Activated naive CD4-positive, alpha-beta T cell treated with anti-CD3 and anti-CD28 coated beads, Interleukin-2, amount 10 ng/mL, durations not matched to agents 7 days and 5 days (primary cell): ENCODE measurements at regions of chr18 and their contacts with region 1.

Region 1: GRCh38 chr18:12934454-12935071 is 13.2 kb upstream of the SEH1L start:
- DNase-seq: peak; percentile 86
- H3K4me3 Mint-ChIP-seq: no peak overlapping the region
- H3K27ac Mint-ChIP-seq: no peak overlapping the region
- H3K4me1 Mint-ChIP-seq: peaks cover 3% of the 10 kb centered on the region
- H3K27me3 Mint-ChIP-seq: peaks cover 22% of the 10 kb centered on the region

Region 2: GRCh38 chr18:12726774-12727550 is 207.6 kb before region 1 on chr18:
- CTCF ChIA-PET with region 1: interaction called, 122 read pairs
- DNase-seq: peak; percentile 68
- H3K4me3 Mint-ChIP-seq: no peak overlapping the region
- H3K27ac Mint-ChIP-seq: no peak overlapping the region
- H3K4me1 Mint-ChIP-seq: peaks cover 2% of the 10 kb centered on the region
- H3K27me3 Mint-ChIP-seq: no peaks in the 10 kb centered on the region

Region 3: GRCh38 chr18:12744103-12744502 is 190.5 kb before region 1 on chr18:
- CTCF ChIA-PET with region 1: interaction called, 114 read pairs
- DNase-seq: no peak
- H3K4me3 Mint-ChIP-seq: no peak overlapping the region
- H3K27ac Mint-ChIP-seq: no peak overlapping the region
- H3K4me1 Mint-ChIP-seq: peaks cover 2% of the 10 kb centered on the region
- H3K27me3 Mint-ChIP-seq: peaks cover 9% of the 10 kb centered on the region

Region 4: DNA sequence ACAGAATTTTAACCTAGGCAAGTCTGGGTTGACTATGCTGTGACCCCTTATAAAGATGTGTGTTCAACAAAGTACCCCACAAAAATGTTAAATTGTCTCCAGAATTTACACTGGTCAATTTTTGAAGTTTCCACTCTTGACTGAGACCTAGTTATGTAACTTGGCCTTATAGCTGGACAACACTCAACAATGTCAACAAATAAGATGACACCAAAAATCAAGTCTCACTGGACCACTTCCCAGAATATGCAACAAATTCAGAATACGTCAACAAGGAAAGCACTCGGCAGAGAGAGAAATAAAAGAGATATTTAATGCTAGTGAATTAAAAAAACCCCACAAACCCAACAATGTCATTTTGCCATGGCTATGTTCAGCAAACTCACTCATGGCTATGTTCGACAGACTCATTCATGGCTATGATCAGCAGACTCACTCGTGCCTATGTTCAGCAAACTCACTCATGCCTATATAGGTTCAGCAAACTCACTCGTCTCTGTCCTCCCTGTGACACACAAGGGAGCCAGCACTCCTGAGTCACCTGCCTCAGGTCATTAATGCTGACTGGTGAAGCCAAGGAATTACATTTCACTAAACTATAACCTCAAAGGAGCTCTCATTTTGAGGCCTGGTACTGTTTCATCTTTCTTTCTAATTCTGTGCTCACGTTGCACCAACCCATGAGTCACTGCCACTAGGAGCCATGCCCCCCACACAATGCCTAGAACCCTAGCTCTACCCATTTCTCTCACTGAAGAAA is 123.2 kb before region 1 on chr18:
- CTCF ChIA-PET with region 1: no interaction called
- DNase-seq: no peak
- H3K4me3 Mint-ChIP-seq: no peak overlapping the region
- H3K27ac Mint-ChIP-seq: no peak overlapping the region
- H3K4me1 Mint-ChIP-seq: no peaks in the 10 kb centered on the region
- H3K27me3 Mint-ChIP-seq: no peaks in the 10 kb centered on the region

Region 5: GRCh38 chr18:12890506-12890905 is 44.1 kb before region 1 on chr18:
- CTCF ChIA-PET with region 1: interaction called, 20 read pairs
- DNase-seq: no peak
- H3K4me3 Mint-ChIP-seq: no peak overlapping the region
- H3K27ac Mint-ChIP-seq: no peak overlapping the region
- H3K4me1 Mint-ChIP-seq: peaks cover 13% of the 10 kb centered on the region
- H3K27me3 Mint-ChIP-seq: peaks cover 33% of the 10 kb centered on the region

Region 6: GRCh38 chr18:12921178-12921577 is 13.4 kb before region 1 on chr18:
- CTCF ChIA-PET with region 1: interaction called, 20 read pairs
- DNase-seq: peak; percentile 39
- H3K4me3 Mint-ChIP-seq: no peak overlapping the region
- H3K27ac Mint-ChIP-seq: peak overlapping the region; percentile 20
- H3K4me1 Mint-ChIP-seq: peaks cover 12% of the 10 kb centered on the region
- H3K27me3 Mint-ChIP-seq: peaks cover 21% of the 10 kb centered on the region

Region 7: DNA sequence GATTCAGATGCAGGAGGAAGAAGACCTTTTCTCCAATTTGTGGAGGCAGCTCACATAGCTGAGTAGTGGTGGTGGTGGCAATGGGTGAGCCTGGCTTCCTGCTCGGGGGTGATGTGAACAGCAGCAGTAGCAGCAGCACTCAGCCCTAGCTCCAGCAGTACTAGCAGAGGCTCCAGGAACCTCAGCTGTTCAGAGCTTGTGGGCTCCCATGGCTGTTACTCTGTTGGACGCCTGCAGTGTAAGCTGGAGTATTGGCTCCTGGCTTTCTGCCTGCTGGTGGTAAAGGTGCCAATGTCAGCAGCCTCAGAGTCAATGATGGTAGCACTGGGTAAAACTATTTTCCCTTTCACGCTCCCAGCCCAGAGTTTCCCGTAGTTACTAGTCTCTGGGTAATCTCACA is 10.1 kb after region 1 on chr18:
- CTCF ChIA-PET with region 1: interaction called, 25 read pairs
- DNase-seq: no peak
- H3K4me3 Mint-ChIP-seq: no peak overlapping the region
- H3K27ac Mint-ChIP-seq: no peak overlapping the region
- H3K4me1 Mint-ChIP-seq: peaks cover 28% of the 10 kb centered on the region
- H3K27me3 Mint-ChIP-seq: peaks cover 4% of the 10 kb centered on the region

Region 8: GRCh38 chr18:13159579-13159978 is 225.0 kb after region 1 on chr18:
- CTCF ChIA-PET with region 1: interaction called, 18 read pairs
- DNase-seq: peak; percentile 33
- H3K4me3 Mint-ChIP-seq: no peak overlapping the region
- H3K27ac Mint-ChIP-seq: no peak overlapping the region
- H3K4me1 Mint-ChIP-seq: peaks cover 2% of the 10 kb centered on the region
- H3K27me3 Mint-ChIP-seq: peaks cover 18% of the 10 kb centered on the region